GM10248 (cell line): ENCODE measurements at regions of chr1 and their contacts with region 1.

Region 1: DNA sequence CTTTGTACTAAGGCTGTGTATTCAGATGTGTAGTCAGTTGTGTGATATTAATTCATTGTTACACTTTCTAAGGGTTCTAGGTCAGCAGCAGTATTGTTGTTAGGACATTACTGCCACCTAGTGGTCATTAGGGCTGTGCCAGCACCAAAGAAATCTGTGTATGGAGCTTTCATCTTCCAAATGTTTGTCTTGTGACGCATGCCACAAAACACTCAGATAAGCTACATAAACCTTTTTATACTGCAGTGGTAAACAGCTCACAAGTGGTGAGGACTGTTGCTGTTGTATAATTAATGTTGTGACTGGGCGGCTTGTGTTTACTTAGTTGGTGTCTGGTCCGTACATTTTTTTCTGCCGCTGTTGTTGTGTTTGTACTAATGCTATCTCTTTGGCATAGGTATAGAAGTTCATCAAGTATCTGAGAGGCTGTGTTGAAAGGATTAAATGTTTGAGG is 51.7 kb downstream of the S1PR1 start:
- DNase-seq: peak; percentile 54
- CTCF ChIP-seq: peak; percentile 75

Region 2: DNA sequence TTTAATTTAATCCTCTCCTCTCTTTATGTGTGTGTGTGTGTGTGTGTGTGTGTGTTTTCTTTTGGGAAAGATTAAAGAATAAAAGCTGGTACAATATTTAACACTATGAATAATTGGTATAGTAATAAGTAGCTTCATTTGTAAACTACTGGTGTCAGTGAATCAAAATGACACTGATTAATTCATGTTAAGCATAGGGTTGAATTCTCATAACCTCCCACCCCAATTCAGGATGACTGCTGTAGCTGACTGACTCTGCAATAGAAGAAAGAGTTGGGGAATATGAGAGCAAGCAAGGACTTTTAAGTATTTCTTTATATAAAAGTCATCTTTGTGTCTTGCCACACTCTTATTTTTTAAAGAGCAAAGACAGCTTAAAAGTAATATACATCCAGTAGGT is 379.5 kb before region 1 on chr1:
- CTCF ChIA-PET with region 1: interaction called, 34 read pairs
- POLR2A ChIA-PET with region 1: no interaction called
- DNase-seq: no peak
- CTCF ChIP-seq: no peak

Region 3: DNA sequence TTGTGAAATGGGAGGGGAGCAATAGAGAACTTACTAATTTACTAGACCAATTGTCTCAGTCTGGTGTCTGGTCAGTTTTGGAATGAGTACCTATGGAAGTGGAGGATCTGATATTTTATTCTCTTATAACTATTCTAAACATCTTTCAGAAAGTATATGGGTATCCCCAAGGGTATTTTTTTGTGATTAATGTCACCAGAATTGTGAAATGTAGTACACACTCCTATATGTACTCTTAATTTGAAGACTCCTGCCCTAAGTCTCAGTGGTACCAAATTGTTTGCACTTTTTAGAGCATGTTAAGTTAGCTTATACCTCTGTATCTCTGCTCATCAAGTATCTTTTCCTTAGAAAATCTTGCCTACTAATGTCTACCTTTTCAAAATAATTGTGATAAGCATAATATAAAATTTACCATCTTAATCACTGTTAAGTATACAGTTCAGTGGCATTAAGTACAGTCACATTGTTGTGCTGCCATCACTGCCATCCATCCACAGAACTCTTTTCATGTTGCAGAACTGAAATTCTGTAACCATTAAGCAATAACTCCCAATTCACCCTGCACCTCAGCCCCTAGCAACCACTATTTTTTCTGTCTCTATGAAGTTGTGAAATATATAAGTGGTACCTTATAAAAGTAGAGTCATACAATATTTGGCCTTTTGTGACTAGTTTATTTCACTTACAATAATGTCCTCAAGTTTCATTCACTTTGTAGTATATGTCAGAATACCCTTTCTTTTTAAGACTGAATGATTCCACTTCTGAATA is 352.1 kb before region 1 on chr1:
- CTCF ChIA-PET with region 1: interaction called, 15 read pairs
- POLR2A ChIA-PET with region 1: no interaction called
- DNase-seq: no peak
- CTCF ChIP-seq: no peak

Region 4: DNA sequence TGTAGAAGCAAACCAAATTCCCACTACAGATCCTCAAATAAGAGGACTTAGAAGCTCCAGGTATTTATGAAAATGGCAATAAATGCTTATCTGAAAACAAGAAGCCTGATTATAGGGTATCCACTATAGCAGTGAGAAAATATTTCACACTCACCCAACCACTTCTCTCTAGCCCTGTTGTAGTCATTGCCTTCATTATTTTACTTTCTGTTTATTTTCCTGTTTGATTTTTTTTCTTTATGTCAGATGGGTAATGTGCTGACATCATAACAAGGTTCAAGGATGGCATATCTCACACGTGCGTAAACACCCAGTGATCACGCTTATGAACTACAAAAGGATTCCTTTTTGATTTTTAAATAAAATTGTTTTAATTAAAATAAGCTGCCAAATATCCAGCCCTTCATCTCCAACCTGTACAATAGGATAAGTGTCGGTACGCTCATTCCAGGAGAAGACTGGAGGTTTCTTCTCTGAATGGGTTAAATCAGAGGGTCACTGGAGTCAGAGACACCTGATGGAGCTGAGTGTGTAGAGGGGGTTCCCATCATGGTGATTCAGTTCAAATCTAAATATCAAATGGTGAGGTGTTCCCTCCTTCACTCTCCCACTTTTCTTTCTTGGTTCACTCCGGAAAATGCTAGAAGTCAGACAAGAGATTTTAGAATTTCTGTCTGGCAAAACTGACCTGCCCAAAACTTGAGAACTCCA is 59.9 kb before region 1 on chr1:
- CTCF ChIA-PET with region 1: no interaction called
- POLR2A ChIA-PET with region 1: no interaction called
- DNase-seq: no peak
- CTCF ChIP-seq: no peak

Region 5: GRCh38 chr1:101238681-101239094 is 49.8 kb before region 1 on chr1:
- CTCF ChIA-PET with region 1: interaction called, 61 read pairs
- POLR2A ChIA-PET with region 1: no interaction called
- DNase-seq: peak; percentile 75
- CTCF ChIP-seq: peak; percentile 93

Region 6: GRCh38 chr1:101259744-101260148 is 28.8 kb before region 1 on chr1:
- CTCF ChIA-PET with region 1: interaction called, 34 read pairs
- POLR2A ChIA-PET with region 1: no interaction called
- DNase-seq: no peak
- CTCF ChIP-seq: no peak

Region 7: GRCh38 chr1:101357444-101357986 is 69.0 kb after region 1 on chr1:
- CTCF ChIA-PET with region 1: interaction called, 25 read pairs
- POLR2A ChIA-PET with region 1: no interaction called
- DNase-seq: peak; percentile 82
- CTCF ChIP-seq: peak; percentile 79